ENCODE measurements at regions of chr17 and their contacts with region 1.

Region 1: DNA sequence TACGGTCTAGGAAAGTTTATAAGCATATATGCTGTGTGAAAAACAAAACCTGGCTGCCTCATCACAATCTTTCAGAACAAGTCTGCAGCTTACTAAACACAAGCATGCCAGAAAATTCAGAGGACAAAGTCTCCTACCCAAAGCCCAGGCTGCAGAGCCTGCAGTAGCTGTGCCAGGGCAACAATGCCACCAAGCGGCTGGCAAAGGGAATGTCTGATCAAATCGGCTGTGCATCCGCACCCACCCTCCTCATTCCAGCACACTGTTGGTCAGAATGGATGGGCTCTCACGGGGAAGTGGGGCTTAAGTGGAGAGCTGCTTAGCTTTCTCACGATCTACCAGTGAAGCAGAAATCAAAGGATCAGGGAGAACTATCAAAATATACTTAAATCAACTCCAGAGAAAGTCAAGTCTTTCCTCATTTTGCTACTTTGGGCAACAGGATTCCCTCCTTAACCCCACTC is 73.5 kb downstream of the CYTH1 start:
- DNase-seq: peak; percentile 39
- H3K4me3 ChIP-seq: no peak overlapping the region
- H3K27me3 ChIP-seq: no peaks in the 10 kb centered on the region
- CTCF ChIP-seq: peak; percentile 89

Region 2: DNA sequence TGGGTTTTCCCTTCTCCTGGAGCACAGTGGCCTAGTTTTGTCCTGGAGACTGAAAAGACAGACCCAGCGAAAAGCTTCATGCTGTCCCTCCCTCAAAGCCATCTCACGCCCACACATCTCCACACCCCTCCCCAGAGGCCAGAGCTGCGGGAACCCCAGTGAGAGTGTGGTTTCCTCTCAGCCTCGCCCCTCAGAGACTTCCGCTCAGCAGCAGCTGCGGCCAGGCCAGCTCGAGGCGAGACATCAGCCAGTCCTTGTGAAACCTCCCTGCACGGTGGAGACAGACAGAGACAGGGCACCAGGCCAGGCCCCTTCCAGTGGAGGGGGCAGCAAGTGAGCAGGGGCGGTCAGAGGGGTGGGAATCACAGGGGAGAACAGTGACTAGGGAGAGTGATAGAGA is 827.0 kb before region 1 on chr17:
- CTCF ChIA-PET with region 1: no interaction called
- POLR2A ChIA-PET with region 1: no interaction called
- DNase-seq: no peak
- H3K4me3 ChIP-seq: no peak overlapping the region
- H3K27me3 ChIP-seq: peaks cover 5% of the 10 kb centered on the region
- CTCF ChIP-seq: no peak

Region 3: DNA sequence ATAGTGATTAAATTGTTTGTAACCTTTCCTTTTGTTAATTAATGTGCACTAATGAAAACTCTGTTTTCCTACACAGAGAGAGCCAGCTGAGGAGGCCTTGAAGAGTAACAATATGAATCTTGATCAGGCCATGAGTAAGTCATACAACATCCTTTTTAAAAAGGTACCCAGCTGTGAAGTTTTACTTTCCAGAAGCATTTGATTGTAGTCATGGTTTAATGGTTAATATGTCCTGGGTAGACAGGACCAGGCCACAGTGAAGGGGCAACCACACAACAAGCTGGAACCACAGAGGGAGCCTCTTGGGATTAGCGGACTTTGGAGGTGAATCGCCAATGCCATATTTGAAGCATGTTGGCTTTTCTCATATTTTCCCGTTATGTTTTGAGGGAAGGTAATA is 635.6 kb before region 1 on chr17:
- CTCF ChIA-PET with region 1: no interaction called
- POLR2A ChIA-PET with region 1: no interaction called
- DNase-seq: no peak
- H3K4me3 ChIP-seq: no peak overlapping the region
- H3K27me3 ChIP-seq: no peaks in the 10 kb centered on the region
- CTCF ChIP-seq: no peak

Region 4: DNA sequence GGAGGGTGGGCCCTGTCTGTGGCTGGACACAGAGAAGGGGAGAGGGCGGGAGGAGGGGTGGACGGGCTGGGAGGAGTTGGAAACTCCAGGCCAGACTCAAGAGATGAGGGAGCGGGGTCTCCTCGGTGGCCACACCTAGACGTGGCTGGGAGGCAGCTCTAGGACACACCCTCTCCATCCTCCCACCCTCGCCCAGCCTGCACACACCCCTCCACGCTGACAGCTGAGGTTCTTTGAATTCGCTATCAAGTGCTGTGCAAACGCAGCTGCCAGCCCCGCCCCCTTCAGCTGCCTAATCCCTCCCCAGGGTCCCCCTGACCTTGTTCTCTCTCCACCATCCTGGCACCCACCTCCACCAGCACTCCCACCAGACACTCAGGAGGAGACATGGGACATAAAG is 180.0 kb before region 1 on chr17:
- CTCF ChIA-PET with region 1: interaction called, 10 read pairs
- POLR2A ChIA-PET with region 1: no interaction called
- DNase-seq: no peak
- H3K4me3 ChIP-seq: no peak overlapping the region
- H3K27me3 ChIP-seq: no peaks in the 10 kb centered on the region
- CTCF ChIP-seq: no peak

Region 5: DNA sequence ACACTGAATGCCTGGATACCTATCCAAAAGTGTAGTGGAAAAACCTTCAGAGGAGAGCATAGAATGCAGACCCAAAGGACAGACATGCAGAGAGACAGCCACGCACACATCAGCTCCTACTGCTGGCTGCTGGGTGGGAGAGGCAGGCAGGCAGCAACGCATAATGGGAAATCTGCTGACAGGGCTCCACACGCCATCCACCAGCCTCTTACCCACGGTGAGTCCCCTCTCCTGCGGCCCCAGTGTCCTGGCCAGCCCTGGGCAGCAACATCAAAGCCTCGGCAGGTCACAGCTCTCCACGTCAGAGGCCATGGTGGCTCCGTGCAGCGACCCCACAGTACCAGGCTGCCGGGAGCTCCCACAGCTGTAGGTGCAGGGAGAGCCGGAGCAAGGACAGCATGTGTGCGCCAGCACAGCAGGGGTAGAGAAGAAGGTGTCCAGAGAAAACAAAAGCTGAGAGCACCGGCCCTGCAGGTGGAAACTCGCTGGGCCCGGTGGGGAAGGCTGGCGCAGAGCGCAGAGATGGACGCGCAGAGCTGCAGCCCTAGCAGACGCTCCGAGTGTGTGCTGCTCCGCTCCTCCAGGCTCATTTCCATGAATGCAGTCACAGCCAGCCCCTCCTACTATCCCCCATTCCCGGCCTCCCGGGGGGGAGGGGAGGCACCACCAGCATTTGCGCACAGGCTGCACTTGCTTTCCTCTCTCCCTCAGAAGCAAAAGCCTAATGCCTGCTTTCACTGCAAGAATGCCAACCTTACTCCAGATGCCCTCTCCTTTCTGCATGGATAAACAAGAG is 14.7 kb after region 1 on chr17:
- CTCF ChIA-PET with region 1: interaction called, 23 read pairs
- POLR2A ChIA-PET with region 1: no interaction called
- DNase-seq: no peak
- H3K4me3 ChIP-seq: no peak overlapping the region; the same call in 1 of the 2 replicates
- H3K27me3 ChIP-seq: no peaks in the 10 kb centered on the region
- CTCF ChIP-seq: no peak

Region 6: DNA sequence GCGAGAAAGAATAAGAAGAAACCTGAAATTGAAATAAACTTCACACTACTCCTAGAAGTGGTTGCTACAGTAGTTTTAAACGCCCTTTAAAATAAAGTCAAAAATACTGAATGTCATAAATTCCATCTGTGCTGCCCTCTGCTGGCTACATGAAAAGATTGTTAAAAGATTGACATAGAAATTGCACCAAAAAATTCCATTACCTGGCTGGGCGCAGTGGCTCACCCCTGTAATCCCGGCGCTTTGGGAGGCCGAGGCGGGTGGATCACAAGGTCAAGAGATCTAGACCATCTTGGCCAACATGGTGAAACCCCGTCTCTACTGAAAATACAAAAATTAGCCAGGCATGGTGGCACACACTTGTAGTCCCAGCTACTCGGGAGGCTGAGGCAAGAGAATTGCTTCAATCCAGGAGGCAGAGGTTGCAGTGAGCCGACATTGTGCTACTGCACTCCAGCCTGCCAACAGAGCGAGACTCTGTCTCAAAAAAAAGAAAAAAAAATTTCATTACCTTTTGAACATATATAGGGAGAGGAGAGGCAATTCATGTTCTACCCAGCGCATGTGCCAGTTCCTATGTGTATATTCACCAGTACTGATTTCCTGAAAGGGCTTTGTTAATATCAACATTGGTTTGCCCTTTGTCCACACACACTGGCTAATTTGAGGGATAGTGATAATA is 37.0 kb after region 1 on chr17:
- CTCF ChIA-PET with region 1: interaction called, 12 read pairs
- POLR2A ChIA-PET with region 1: no interaction called
- DNase-seq: no peak
- H3K4me3 ChIP-seq: no peak overlapping the region
- H3K27me3 ChIP-seq: no peaks in the 10 kb centered on the region
- CTCF ChIP-seq: peak; percentile 47

Region 7: GRCh38 chr17:79045842-79046196 is 337.3 kb after region 1 on chr17:
- CTCF ChIA-PET with region 1: no interaction called
- POLR2A ChIA-PET with region 1: no interaction called
- DNase-seq: no peak
- H3K4me3 ChIP-seq: no peak overlapping the region
- H3K27me3 ChIP-seq: no peaks in the 10 kb centered on the region; the same call in 1 of the 2 replicates
- CTCF ChIP-seq: peak; percentile 98